ENCODE measurements at regions of chrX and their contacts with region 1.

Region 1: GRCh38 chrX:68462653-68463052 is 29.4 kb upstream of the OPHN1 start:
- DNase-seq: peak; percentile 34
- ATAC-seq: peak; percentile 53
- H3K4me3 Mint-ChIP-seq: no peak overlapping the region
- H3K27ac Mint-ChIP-seq: no peak overlapping the region
- H3K4me1 Mint-ChIP-seq: no peaks in the 10 kb centered on the region
- H3K27me3 Mint-ChIP-seq: peaks cover 1% of the 10 kb centered on the region
- CTCF ChIP-seq: peak; percentile 52

Region 2: DNA sequence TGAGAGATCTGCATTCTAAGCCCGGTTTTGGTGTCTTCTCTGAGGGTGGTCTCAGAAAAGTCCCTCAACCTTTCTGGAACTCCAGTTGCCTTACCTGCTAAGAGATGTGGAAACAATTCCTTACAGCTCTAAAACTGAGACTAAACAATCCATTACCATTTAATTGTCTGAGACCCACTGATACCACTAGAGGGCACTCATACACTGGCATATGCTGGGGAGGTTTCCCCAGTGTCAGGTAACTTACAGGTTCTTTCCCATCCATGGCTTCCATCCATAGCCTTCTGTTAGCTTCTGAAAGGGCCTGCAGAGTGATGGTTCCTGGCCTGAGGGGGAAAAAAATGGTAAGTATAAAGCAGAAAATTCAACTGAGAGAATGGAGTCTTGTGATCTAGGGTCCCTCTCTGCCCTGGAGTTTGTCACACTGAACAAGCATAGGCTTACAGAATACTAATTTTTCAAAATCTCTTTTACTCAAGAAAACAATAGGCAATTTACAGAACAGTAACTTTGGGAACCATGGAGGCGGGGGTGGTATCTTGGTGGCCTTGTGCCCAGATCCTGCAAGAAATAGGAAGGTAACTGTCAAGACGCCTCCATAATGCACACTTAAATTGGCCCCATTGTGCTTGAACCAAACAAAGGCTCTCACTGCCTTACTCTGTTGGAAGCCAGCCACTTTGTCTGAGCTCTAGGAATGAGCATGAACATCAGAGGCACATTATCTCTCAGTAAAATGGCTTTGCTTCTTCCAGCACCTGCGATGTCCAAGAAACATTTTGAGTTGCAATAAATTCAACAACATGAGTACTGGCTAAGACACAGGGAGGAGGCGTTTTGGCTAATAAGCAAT is 265.5 kb before region 1 on chrX:
- CTCF ChIA-PET with region 1: interaction called, 7 read pairs
- POLR2A ChIA-PET with region 1: no interaction called
- intact Hi-C with region 1: loop called (anchors 2 kb)
- DNase-seq: peak; percentile 26
- ATAC-seq: peak; percentile 47
- H3K4me3 Mint-ChIP-seq: no peak overlapping the region
- H3K27ac Mint-ChIP-seq: no peak overlapping the region
- H3K4me1 Mint-ChIP-seq: no peaks in the 10 kb centered on the region
- H3K27me3 Mint-ChIP-seq: peaks cover 2% of the 10 kb centered on the region
- CTCF ChIP-seq: peak; percentile 45

Region 3: DNA sequence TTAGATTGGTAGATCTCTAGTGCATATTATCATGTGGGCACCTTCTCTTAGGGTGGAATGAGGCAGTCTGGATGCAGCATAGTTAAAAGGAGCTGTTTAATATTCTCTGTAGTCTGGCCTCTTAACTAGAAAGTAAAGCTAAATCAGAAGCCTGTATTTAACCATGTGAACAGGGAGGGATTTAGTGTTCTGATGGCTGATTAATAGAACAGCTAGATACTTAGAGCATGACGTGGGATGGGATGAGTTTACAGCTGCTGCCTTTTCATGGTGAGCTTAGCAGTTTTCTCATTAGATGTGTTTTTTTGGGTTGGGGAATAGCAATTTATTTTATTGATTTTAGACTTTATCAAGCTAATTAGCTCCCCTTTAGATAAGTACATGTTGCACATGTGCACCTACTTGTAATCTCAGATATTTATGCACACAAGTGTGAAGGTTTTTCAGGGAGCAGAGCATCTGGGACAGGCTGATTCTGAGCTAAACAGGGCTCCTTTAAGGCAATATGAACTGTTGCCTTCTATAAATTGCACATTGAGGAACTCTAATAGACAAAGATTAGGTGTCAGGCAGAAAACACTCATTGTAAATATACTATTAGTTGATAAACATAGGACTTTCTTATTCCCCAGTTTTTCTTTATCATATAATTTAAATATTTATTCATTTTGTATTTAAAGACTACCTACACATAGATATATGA is 70.3 kb after region 1 on chrX:
- CTCF ChIA-PET with region 1: no interaction called
- POLR2A ChIA-PET with region 1: no interaction called
- intact Hi-C with region 1: no loop called
- DNase-seq: no peak
- ATAC-seq: no peak
- H3K4me3 Mint-ChIP-seq: no peak overlapping the region
- H3K27ac Mint-ChIP-seq: no peak overlapping the region
- H3K4me1 Mint-ChIP-seq: peaks cover 7% of the 10 kb centered on the region
- H3K27me3 Mint-ChIP-seq: no peaks in the 10 kb centered on the region
- CTCF ChIP-seq: no peak